Activated B cell treated with CpG ODN at 0.5 μM for 24 hours (primary cell): ENCODE measurements at regions of chr6 and their contacts with region 1.

Region 1: DNA sequence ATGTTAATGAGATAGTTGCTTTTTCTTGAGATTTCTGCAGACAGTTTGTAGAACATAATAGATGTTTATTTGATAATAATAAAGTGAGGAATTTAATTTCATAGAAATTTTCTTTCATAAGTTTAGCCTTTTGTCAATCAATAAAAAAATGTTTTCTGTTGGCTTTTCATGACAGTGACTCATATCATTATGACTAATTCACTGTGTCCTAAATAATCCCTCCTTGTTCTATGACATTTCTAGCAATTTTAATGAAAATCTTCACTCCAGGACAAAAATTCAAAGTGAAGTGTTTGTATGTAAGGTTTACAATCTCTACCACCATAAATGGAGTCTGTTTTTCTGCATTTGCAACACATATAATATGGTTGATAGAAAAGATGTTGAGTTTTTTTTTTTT is 109.9 kb downstream of the UTRN start:
- DNase-seq: no peak
- ATAC-seq: no peak
- H3K4me3 Mint-ChIP-seq: no peak overlapping the region
- H3K27ac Mint-ChIP-seq: no peak overlapping the region
- H3K4me1 Mint-ChIP-seq: peaks cover 36% of the 10 kb centered on the region
- H3K27me3 Mint-ChIP-seq: no peaks in the 10 kb centered on the region
- CTCF ChIP-seq: no peak

Region 2: DNA sequence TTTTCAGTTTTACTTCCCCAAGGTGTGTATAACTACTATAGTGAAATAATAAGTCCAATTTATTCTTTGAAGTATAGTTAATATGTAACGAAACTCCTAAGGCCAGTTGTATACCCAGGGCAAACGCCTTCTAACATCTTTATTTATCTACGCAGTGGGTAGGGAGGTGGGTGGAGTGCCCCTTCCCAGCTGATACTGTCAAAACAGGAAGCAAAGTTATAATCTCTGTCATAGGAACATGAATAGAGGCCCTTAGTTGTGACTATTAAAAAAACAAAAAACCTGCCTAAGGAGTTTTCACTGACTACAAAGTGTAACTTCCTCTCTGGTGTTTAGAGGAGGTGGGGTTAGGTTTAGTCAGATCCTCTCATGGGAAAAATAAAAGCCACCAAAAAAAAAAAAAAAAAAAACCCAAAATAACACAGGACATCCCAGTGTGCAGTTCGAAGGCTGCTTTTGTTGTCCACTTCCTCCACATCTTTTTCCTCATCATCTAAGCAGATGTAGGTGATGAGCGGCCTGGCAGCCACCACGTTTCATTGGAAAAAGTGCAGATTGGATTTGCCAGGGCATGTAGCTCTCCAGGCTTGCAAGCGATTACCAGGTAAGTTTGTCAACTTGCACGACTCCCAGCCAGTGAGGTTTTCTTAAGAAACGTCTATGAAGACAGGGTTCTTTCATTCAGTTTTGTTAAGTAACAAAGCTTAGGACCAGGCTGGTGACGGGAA is 51.1 kb before region 1 on chr6:
- CTCF ChIA-PET with region 1: no interaction called
- POLR2A ChIA-PET with region 1: no interaction called
- intact Hi-C with region 1: no loop called
- DNase-seq: no peak
- ATAC-seq: peak; percentile 80
- H3K4me3 Mint-ChIP-seq: peak overlapping the region; percentile 93
- H3K27ac Mint-ChIP-seq: peak overlapping the region; percentile 97
- H3K4me1 Mint-ChIP-seq: peaks cover 98% of the 10 kb centered on the region
- H3K27me3 Mint-ChIP-seq: no peaks in the 10 kb centered on the region
- CTCF ChIP-seq: no peak

Region 3: DNA sequence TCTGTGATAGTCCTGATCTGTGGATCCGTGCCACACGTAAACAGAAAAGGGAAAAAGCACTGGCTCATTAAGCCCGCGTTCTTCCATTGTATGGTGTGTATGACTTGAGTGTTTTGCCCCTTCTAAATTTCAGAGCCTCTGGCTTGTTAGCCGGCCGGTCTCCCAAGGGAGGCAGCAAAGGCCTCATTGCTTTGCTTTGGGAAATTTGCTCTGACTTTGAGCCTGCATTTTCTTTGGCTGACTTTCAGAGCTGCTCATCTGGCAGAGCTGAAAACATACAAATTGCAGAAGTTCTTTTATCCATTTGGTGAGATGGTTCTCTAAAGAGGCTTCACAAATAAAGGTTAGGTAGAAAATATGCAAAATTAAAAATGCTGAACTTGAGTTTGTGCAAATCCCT is 13.1 kb after region 1 on chr6:
- CTCF ChIA-PET with region 1: no interaction called
- POLR2A ChIA-PET with region 1: no interaction called
- intact Hi-C with region 1: loop called (anchors 1 kb)
- DNase-seq: no peak
- ATAC-seq: no peak
- H3K4me3 Mint-ChIP-seq: no peak overlapping the region
- H3K27ac Mint-ChIP-seq: no peak overlapping the region
- H3K4me1 Mint-ChIP-seq: peaks cover 34% of the 10 kb centered on the region
- H3K27me3 Mint-ChIP-seq: no peaks in the 10 kb centered on the region
- CTCF ChIP-seq: no peak